Mammary epithelial cell (primary cell): ENCODE measurements at regions of chr11 and their contacts with region 1.

Region 1: DNA sequence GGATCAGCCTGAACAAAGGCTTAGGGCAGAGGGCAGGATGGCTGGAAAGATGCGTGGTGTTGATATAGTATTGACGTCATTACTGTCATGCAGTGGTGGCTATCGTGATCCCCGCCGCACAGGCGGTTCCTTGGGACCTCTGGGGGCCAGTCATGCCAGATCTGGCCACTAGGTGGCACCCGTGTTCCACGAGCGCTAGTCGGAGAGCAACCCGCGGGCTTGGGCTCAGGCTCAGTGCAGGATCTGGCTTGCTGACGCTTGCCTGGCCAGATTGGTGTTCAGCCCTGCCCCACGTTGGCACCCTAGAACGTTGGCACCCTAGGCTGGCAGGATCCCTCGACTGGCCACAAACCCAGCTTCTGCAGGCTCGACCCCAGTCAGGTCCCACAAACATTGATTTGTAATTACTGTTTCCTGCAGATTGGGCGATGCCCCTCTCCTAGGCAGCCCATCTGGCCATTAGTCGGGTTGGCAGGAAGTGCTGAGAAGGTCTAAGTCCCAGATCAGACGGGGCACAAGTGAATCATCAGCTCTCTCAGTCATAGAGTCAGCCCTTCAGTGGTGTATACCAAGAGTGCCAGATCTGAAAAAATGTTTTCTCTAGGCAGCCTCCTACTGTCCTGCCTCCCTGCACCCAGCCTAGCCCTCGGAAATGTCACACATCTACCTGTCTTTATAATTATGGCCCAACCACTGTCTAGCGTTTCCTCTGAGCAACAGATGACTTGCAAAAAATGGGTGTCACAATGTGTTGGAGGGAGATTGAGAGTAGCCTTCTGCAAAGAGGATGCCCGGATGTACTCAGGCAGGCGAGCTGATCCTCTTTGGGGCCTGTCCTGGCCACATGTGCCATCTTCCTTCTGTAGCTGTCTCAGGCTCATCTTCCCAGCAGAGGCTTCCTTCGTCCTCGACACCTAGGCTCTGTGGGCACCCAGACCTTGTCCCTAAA is 315.3 kb downstream of the TMEM135 start:
- DNase-seq: peak; percentile 78
- H3K4me3 ChIP-seq: peak overlapping the region in 2 of 3 experiments; percentile 13 to 30
- H3K27ac ChIP-seq: no peak overlapping the region
- H3K4me1 ChIP-seq: peaks cover 8% of the 10 kb centered on the region
- H3K27me3 ChIP-seq: no peaks in the 10 kb centered on the region
- CTCF ChIP-seq: peak; percentile 89 to 99

Region 2: DNA sequence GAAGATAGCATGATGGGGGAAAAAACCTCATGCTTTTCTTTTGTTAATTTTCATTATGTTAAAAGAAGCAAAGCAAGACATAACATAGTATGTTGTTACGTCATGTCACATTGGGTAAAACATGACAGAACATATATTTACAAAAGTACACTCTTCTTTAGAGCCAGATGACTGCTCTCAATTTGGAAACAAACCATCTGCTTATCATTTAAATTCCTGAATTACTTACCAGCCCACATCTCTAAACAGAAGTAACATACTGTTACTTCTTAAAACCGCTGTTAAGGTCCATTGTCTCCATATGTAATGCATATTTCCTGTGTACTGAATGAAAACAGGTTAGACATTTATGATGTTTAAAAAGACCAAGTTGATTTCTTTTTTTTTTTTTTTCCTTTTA is 215.3 kb before region 1 on chr11:
- CTCF ChIA-PET with region 1: no interaction called
- dilution Hi-C with region 1: no loop called
- in situ Hi-C with region 1: no loop called
- intact Hi-C with region 1: no loop called
- DNase-seq: no peak
- H3K4me3 ChIP-seq: no peak overlapping the region
- H3K27ac ChIP-seq: no peak overlapping the region
- H3K4me1 ChIP-seq: no peaks in the 10 kb centered on the region
- H3K27me3 ChIP-seq: no peaks in the 10 kb centered on the region
- CTCF ChIP-seq: no peak

Region 3: GRCh38 chr11:87265132-87265531 is 87.9 kb before region 1 on chr11:
- CTCF ChIA-PET with region 1: no interaction called
- dilution Hi-C with region 1: no loop called
- in situ Hi-C with region 1: no loop called
- intact Hi-C with region 1: no loop called
- DNase-seq: peak; percentile 35
- H3K4me3 ChIP-seq: no peak overlapping the region
- H3K27ac ChIP-seq: no peak overlapping the region
- H3K4me1 ChIP-seq: peaks cover 2% of the 10 kb centered on the region
- H3K27me3 ChIP-seq: no peaks in the 10 kb centered on the region
- CTCF ChIP-seq: no peak

Region 4: DNA sequence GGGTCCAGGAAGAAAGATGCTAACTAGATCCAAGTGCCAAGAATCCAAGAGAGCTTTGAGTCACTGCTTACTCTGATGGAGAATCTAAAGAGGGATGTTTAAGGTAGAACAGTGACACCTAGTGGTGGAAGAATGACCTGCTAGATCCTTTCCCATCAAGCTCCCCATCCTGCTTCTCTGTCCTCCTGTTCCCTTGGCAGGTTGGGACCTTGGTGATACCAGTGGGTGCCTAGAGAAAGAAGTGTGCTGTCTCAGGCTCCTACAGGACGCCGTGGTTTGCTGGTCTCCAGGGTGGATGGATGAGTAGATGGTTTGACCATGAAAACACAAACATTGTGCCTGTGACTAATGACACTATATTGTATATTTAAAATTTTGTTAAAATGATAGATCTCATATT is 68.4 kb after region 1 on chr11:
- CTCF ChIA-PET with region 1: interaction called, 7 read pairs
- dilution Hi-C with region 1: loop called (anchors 10 kb)
- in situ Hi-C with region 1: loop called (anchors 5 to 10 kb)
- intact Hi-C with region 1: loop called (anchors 1 kb)
- DNase-seq: peak; percentile 64
- H3K4me3 ChIP-seq: no peak overlapping the region
- H3K27ac ChIP-seq: no peak overlapping the region
- H3K4me1 ChIP-seq: no peaks in the 10 kb centered on the region
- H3K27me3 ChIP-seq: no peaks in the 10 kb centered on the region
- CTCF ChIP-seq: peak; percentile 62 to 79

Region 5: GRCh38 chr11:87753143-87753542 is 400.1 kb after region 1 on chr11:
- CTCF ChIA-PET with region 1: no interaction called
- dilution Hi-C with region 1: no loop called
- in situ Hi-C with region 1: no loop called
- intact Hi-C with region 1: no loop called
- DNase-seq: no peak
- H3K4me3 ChIP-seq: no peak overlapping the region
- H3K27ac ChIP-seq: no peak overlapping the region
- H3K4me1 ChIP-seq: no peaks in the 10 kb centered on the region
- H3K27me3 ChIP-seq: no peaks in the 10 kb centered on the region
- CTCF ChIP-seq: no peak

Region 6: DNA sequence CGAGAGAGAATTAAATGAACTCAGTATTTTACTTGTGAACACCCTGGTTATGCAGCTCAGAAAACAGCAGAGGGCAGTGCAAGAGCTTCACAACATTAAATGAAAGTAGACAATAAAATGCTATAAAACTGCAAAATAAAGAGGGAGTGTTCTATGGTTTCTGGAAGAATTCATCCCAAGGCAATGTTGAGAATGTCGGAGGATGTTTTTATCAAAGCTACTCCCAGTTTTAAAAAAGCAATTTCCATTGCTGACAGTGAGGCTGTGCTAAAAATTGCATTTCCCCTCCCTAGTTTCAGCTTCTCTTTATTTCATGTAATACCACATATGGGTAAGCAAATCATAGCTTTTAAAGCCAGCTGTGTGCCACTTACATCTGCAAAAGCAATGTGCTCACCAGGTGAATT is 525.3 kb after region 1 on chr11:
- CTCF ChIA-PET with region 1: no interaction called
- dilution Hi-C with region 1: no loop called
- in situ Hi-C with region 1: no loop called
- intact Hi-C with region 1: loop called (anchors 10 kb)
- DNase-seq: peak; percentile 13
- H3K4me3 ChIP-seq: no peak overlapping the region
- H3K27ac ChIP-seq: no peak overlapping the region
- H3K4me1 ChIP-seq: no peaks in the 10 kb centered on the region
- H3K27me3 ChIP-seq: no peaks in the 10 kb centered on the region
- CTCF ChIP-seq: peak; percentile 59 to 60